CD4-positive, alpha-beta T cell (primary cell): ENCODE measurements at regions of chr15 and their contacts with region 1.

Region 1: DNA sequence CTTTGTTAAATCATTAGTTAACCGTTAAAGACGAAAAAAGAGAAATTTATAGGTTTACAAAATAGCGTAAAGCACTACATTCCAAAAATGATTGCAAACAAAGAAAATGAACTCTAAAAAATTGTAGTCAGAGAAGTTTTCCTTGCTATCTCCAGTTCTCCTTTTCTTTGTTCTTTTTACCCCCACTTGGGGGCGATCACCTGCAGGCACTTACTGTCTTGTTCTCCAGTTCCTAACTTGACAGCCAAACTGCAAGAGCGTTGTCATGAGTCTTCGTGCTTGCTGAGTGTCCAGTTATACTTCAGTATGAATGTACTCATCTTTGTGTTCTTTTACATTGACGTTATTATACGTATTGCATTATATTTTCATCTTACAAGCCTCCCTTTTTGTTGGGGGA is 54.5 kb downstream of the CHD2 start:
- DNase-seq: peak in 3 of 14 experiments; percentile 15 to 37 (median 32)
- ATAC-seq: no peak
- H3K4me3 ChIP-seq: no peak overlapping the region
- H3K4me3 Mint-ChIP-seq: no peak overlapping the region
- H3K27ac ChIP-seq: no peak overlapping the region
- H3K27ac Mint-ChIP-seq: no peak overlapping the region
- H3K4me1 ChIP-seq: no peaks in the 10 kb centered on the region
- H3K4me1 Mint-ChIP-seq: peaks cover 41% of the 10 kb centered on the region
- H3K27me3 ChIP-seq: no peaks in the 10 kb centered on the region
- H3K27me3 Mint-ChIP-seq: no peaks in the 10 kb centered on the region
- CTCF ChIP-seq: peak; percentile 26

Region 2: GRCh38 chr15:92938387-92938786 is 16.2 kb before region 1 on chr15:
- CTCF ChIA-PET with region 1: interaction called, 4 read pairs
- POLR2A ChIA-PET with region 1: interaction called, 3 read pairs
- intact Hi-C with region 1: loop called in 1 of 2 experiments (anchors 2 kb)
- DNase-seq: no peak
- ATAC-seq: no peak
- H3K4me3 ChIP-seq: no peak overlapping the region
- H3K4me3 Mint-ChIP-seq: no peak overlapping the region
- H3K27ac ChIP-seq: no peak overlapping the region
- H3K27ac Mint-ChIP-seq: no peak overlapping the region
- H3K4me1 ChIP-seq: peaks cover 18% of the 10 kb centered on the region
- H3K4me1 Mint-ChIP-seq: peaks cover 58% of the 10 kb centered on the region
- H3K27me3 ChIP-seq: no peaks in the 10 kb centered on the region
- H3K27me3 Mint-ChIP-seq: no peaks in the 10 kb centered on the region
- CTCF ChIP-seq: no peak

Region 3: GRCh38 chr15:92968926-92969651 is 14.5 kb after region 1 on chr15:
- CTCF ChIA-PET with region 1: interaction called, 8 read pairs
- POLR2A ChIA-PET with region 1: interaction called, 3 read pairs
- intact Hi-C with region 1: loop called in 1 of 2 experiments (anchors 2 kb)
- DNase-seq: peak in 2 of 14 experiments; percentile 23 to 26
- ATAC-seq: peak; percentile 41
- H3K4me3 ChIP-seq: no peak overlapping the region
- H3K4me3 Mint-ChIP-seq: no peak overlapping the region
- H3K27ac ChIP-seq: no peak overlapping the region
- H3K27ac Mint-ChIP-seq: peak overlapping the region; percentile 37
- H3K4me1 ChIP-seq: peaks cover 3% of the 10 kb centered on the region
- H3K4me1 Mint-ChIP-seq: peaks cover 53% of the 10 kb centered on the region
- H3K27me3 ChIP-seq: no peaks in the 10 kb centered on the region
- H3K27me3 Mint-ChIP-seq: no peaks in the 10 kb centered on the region
- CTCF ChIP-seq: no peak

Region 4: DNA sequence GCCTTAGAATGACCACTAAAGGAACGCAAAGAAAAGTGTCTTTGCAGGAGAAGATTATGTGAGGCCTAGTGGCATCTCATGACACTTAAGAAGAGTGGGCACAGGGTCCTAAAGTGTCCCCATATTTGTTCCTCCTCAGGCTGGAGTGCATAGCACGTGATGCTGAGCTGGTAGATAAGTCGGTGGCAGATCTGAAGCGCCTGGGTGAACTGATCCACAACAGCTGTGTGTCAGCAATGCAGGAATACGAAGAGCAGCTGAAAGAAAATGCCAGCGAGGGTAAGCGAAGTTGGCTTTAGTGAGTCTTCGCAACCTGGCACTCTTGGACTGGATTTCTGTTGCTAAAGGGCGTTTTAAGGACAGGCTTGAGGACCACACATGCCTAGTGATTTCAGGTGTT is 38.1 kb after region 1 on chr15:
- CTCF ChIA-PET with region 1: interaction called, 3 read pairs
- POLR2A ChIA-PET with region 1: no interaction called
- intact Hi-C with region 1: loop called in 1 of 2 experiments (anchors 5 kb)
- DNase-seq: no peak
- ATAC-seq: no peak
- H3K4me3 ChIP-seq: no peak overlapping the region
- H3K4me3 Mint-ChIP-seq: no peak overlapping the region
- H3K27ac ChIP-seq: no peak overlapping the region
- H3K27ac Mint-ChIP-seq: peak overlapping the region; percentile 60
- H3K4me1 ChIP-seq: peaks cover 4% of the 10 kb centered on the region
- H3K4me1 Mint-ChIP-seq: peaks cover 60% of the 10 kb centered on the region
- H3K27me3 ChIP-seq: no peaks in the 10 kb centered on the region
- H3K27me3 Mint-ChIP-seq: no peaks in the 10 kb centered on the region
- CTCF ChIP-seq: no peak

Region 5: DNA sequence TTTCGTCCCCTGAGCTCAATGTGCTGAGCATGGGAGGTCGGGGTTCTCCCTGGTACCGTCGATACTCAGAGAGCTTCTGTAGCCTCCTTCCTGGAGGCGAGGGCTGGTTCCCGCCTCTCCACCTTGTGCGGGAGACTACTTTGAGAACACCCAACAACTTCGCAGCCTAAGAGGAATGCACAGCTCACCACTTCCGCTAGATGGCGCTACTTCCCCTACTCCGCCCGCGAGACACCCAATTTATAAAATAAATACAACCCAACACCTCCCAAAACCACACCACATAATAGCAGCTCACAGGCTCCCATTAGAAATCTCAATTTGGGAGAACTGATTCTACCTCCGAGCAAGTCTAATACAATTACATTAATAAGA is 133.2 kb after region 1 on chr15:
- CTCF ChIA-PET with region 1: no interaction called
- POLR2A ChIA-PET with region 1: no interaction called
- intact Hi-C with region 1: no loop called
- DNase-seq: peak; percentile 43 to 84 (median 56)
- ATAC-seq: peak; percentile 78
- H3K4me3 ChIP-seq: peak overlapping the region; percentile 22
- H3K4me3 Mint-ChIP-seq: peak overlapping the region; percentile 87
- H3K27ac ChIP-seq: no peak overlapping the region
- H3K27ac Mint-ChIP-seq: no peak overlapping the region
- H3K4me1 ChIP-seq: peaks cover 18% of the 10 kb centered on the region
- H3K4me1 Mint-ChIP-seq: peaks cover 18% of the 10 kb centered on the region
- H3K27me3 ChIP-seq: peaks cover 36 to 70% of the 10 kb centered on the region in 2 experiments
- H3K27me3 Mint-ChIP-seq: peaks cover 80% of the 10 kb centered on the region
- CTCF ChIP-seq: peak; percentile 79